Posterior vena cava (tissue), 2 donors: ENCODE measurements at regions of chr2 and their contacts with region 1.

Region 1: GRCh38 chr2:105576440-105577252 is 168.1 kb upstream of the NCK2 start:
- DNase-seq: no peak

Region 2: DNA sequence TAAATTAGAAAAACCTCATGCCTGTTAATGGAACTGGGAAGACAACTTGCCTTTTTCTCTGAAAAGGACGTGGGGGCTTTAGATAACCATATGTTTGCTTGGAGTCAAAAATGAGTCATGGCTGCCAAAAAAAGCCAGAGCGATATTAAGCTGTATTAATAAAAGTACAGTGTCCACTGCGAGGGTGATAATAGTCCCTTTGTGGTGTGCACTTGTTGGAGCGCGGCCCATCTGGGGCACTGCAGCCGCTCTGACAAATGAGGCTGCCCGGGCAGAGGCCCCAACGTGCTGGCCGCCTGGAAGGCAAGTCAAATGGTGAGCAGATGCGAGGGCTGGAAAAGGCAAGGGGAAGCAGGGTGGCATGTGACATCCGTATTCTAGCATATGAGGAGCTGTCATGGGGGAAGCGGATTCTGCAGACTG is 64.8 kb after region 1 on chr2:
- intact Hi-C with region 1: no loop called
- DNase-seq: no peak

Region 3: DNA sequence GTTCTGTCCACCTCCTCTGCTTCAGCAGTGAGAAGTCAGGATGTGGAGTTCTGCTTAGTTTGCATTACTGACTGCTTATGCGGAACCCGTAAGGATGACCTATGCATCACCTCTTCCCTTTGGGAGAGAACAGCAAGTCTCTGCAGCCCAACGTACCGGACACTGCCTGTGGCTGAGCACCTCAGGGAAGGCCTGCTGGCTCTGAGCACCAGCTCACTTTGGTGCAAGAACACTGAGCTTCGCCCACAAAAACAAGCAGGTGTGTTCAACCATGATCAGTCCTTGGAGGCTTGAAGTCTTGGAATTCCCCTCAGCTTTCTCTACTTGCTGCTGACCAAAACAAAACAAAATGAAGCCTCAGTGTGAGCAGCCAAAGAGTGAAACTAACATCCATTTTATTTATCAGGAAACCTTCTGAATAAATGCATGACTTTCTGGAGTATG is 115.3 kb after region 1 on chr2:
- intact Hi-C with region 1: no loop called
- DNase-seq: no peak

Region 4: DNA sequence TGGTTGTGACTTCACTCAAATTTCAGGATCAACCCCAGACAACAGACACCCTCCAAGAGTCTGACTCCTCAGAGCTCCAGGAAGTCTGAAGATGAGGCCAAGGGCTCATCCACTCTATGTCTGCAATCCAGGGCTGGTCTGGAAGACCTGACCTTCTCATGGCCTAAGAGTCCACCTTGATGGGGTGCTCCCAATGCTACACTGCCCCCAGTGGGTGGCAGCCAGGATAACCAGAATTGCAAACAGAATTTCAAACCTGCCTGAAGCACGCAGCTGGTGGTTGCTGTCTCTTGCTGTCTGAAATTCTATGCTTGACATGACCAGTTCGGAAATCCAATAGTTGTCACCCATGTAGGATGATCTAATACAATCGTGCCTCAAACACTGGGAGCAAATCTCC is 521.4 kb after region 1 on chr2:
- intact Hi-C with region 1: loop called (anchors 10 kb)
- DNase-seq: no peak

Region 5: DNA sequence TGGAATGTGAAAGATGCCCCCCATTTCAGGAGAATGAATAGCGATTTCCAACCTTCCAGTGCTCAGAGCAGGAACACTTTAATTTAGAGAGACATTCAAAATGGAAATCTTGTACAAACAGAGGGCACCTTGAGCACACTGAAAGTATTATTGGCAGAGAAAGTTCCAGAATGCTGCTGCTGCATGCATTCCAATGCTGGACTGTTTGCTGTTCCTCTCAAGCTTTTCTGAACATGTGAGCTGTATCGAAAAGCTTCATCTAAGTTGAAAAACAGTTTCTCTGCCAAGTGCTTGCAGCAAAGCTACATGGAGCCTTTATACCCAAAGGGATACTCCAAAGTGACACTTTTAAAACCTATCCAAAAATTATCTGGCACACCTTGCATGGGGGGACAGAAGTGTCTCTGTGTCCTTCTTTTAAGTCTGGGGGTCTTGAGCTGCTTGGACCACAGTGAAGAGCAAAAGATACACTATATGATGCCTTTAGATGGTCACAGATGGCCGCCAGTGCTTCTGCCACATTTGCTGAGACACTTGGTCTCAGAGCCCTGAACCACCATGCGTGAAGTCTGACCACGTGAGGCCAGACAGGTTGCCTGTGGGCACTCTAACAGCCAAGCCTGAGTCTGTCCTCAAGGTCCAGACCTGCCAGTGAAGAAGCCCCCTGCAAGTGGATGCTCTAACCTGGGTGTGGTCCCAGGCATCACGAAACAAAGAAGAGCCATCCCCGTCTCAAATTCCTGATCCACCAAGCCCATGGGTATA is 598.6 kb after region 1 on chr2:
- intact Hi-C with region 1: loop called in 1 of 2 experiments (anchors 10 kb)
- DNase-seq: no peak